Motor neuron (in vitro differentiated cells): ENCODE measurements at regions of chr10 and their contacts with region 1.

Region 1: GRCh38 chr10:113385021-113385999 is 167.5 kb upstream of the HABP2 start:
- ATAC-seq: peak; percentile 89 to 100 (median 100)
- H3K4me3 ChIP-seq: no peak overlapping the region
- H3K27ac ChIP-seq: no peak overlapping the region
- H3K4me1 ChIP-seq: peaks cover 2 to 13% of the 10 kb centered on the region in 2 donors

Region 2: DNA sequence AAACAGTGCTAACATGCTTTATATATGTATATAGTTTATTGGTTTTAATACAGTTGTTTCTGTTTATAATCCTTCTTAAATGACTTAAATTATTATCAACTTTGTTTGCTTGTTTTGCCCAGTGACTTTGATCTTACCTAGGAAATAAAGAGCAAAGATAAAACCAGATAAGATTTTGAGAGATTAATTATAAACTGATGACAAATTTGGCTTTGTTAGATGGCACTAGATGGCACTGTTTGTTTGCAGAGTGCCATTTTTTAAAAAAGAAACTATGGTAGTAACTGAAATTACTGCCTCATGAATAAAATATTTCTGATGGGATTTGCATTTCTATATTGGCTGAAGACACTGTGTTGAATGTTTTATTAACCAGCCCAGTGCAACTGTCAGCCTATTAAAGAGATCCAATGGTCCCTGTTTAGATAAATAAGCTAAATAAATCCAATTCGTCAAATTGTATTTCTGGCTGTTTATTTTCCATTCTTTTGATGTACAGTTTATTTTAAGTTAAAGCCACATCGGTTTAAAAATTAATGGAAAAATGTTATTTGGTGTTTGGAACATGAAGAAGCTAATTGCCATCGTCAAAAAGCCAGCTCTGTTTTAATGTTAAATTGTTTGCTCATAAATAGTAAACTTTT is 909.6 kb before region 1 on chr10:
- in situ Hi-C with region 1: loop called in 1 of 9 experiments (anchors 25 kb)
- ATAC-seq: peak in 3 of 8 experiments; percentile 57 to 71 (median 65)
- H3K4me3 ChIP-seq: no peak overlapping the region
- H3K27ac ChIP-seq: no peak overlapping the region
- H3K4me1 ChIP-seq: peaks cover 7 to 9% of the 10 kb centered on the region in 2 donors

Region 3: GRCh38 chr10:112565434-112566053 is 819.8 kb before region 1 on chr10:
- in situ Hi-C with region 1: loop called in 1 of 9 experiments (anchors 25 kb)
- ATAC-seq: peak in 6 of 8 experiments; percentile 46 to 88 (median 70)
- H3K4me3 ChIP-seq: no peak overlapping the region
- H3K27ac ChIP-seq: no peak overlapping the region
- H3K4me1 ChIP-seq: peaks cover 5 to 9% of the 10 kb centered on the region in 2 donors

Region 4: GRCh38 chr10:112949875-112950507 is 435.3 kb before region 1 on chr10 and contains the start of gene TCF7L2:
- in situ Hi-C with region 1: loop called in 1 of 9 experiments (anchors 25 kb)
- ATAC-seq: peak; percentile 64 to 83 (median 70)
- H3K4me3 ChIP-seq: peak within 1 kb of the TSS; percentile 33 to 87 (median 74)
- H3K27ac ChIP-seq: peak within 1 kb of the TSS; percentile 75 to 95
- H3K4me1 ChIP-seq: peaks cover 0 to 20% of the 10 kb centered on the region in 2 donors
- total RNA-seq, gene TCF7L2: 2.2 to 62.9 (median 7.5) TPM

Region 5: DNA sequence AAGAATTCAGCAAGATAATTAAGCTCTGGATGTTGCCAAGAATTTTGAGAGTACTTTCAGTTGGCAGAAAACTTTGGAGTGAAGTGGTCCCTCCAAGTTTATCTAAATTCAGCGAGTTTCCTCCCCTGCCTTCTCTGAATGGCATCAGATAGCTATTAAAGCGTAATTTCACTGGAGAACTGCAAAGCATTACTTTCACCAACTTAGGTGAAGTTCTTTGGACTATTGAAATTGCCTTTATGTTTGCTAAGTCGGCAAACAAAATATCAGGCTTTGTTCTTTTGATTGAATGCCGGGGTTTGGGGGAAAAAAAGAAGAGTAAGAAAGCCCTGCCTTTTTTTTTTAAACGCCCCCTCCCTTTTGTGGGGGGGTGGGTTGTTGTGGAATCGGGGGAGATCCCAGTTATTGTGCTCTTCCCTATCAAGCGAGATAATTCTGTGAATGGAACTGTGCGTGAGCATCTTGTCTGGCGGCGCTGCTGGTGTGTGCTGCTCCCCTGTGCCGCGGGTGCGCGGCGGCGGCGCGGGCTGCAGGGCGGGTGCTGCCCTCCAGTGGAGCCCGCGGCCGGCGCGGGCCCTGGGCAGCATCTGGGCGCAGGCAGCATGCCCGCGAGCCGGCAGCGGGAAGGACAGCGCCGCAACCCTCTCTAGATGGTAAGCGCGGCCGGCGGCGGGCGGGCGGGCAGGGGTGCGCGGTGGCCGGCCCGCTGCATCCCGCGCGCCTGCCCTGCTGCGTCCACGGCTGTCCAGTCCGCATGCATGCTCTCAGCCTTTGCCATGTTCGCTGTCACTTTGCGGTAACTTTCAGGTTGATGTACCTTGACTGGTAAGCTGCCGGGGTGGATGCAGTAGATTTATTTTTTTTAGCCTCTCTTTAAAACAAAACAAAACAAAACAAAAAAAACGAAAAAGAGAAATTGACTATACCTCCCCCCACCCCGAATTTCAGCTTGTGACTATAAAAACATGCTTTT is 258.8 kb before region 1 on chr10:
- in situ Hi-C with region 1: loop called in 4 of 9 experiments (anchors 10 to 25 kb)
- ATAC-seq: peak; percentile 72 to 100 (median 99)
- H3K4me3 ChIP-seq: peak overlapping the region; percentile 19 to 35 (median 32)
- H3K27ac ChIP-seq: no peak overlapping the region
- H3K4me1 ChIP-seq: peaks cover 18 to 27% of the 10 kb centered on the region in 2 donors

Region 6: GRCh38 chr10:113139699-113140098 is 245.6 kb before region 1 on chr10:
- in situ Hi-C with region 1: loop called in 4 of 9 experiments (anchors 10 to 25 kb)
- ATAC-seq: peak in 3 of 8 experiments; percentile 2 to 30 (median 14)
- H3K4me3 ChIP-seq: no peak overlapping the region
- H3K27ac ChIP-seq: no peak overlapping the region
- H3K4me1 ChIP-seq: peaks cover 25 to 38% of the 10 kb centered on the region in 2 donors